A549 (cell line): ENCODE measurements at regions of chr21 and their contacts with region 1.

Region 1: DNA sequence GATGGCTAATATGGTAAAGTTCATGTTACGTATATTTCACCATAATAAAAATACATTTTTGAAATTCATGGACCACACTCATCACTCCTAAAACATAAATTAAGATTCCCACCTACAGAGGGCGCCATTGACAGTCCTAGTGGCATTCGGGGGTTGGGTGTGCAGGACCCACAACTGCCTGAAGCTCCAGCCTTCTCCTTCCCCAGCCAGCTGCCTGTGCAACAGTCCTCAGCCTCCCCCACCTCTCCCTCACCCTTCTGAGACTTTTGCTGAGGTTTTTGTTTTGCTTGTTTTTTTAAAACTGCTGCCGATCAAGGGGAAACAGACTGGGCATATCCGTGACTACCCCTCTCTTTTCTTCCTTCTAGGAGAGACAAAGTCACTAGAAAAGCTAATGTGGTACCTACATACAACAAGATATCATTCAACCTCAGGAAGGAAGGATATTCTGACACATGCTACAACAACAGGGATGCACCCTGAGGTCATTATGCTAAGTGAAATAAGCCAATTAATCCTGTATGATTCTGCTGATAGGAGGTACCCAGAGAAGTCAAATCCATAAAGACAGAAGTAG is 9.2 kb upstream of the EVA1C start:
- DNase-seq: peak; percentile 45 to 62
- ATAC-seq: peak; percentile 81 to 94; a peak in 5 of 6 replicates
- H3K4me3 ChIP-seq: no peak overlapping the region
- H3K27ac ChIP-seq: peak overlapping the region; percentile 45 to 73; a peak in 5 of 6 replicates
- H3K4me1 ChIP-seq: peaks cover 10% of the 10 kb centered on the region
- CTCF ChIP-seq: peak; percentile 61
- EP300 ChIP-seq: no peak
- POLR2A ChIP-seq: no peak
- RAD21 ChIP-seq: peak; percentile 68 to 73

Region 2: DNA sequence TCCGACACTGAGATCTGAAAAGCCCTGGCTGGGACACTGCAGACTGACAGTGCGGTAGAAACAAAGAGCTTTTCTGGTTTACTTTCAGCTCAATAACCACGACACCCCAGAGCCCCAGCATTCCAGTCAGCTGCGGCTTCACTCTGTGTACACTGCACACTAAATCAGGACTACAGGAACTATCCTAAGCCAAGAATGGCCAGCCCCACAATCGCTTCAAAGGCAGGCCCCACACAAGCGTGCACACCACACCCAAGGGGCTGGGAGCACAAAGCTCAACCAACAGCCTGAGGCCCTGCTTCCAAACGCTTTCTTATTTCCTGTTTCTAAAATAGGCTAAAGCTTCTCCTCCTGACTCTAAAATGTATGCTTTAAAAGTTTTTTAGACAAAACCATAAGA is 38.9 kb before region 1 on chr21:
- CTCF ChIA-PET with region 1: no interaction called
- POLR2A ChIA-PET with region 1: no interaction called
- DNase-seq: no peak
- ATAC-seq: no peak
- H3K4me3 ChIP-seq: no peak overlapping the region
- H3K27ac ChIP-seq: no peak overlapping the region
- H3K4me1 ChIP-seq: peaks cover 5% of the 10 kb centered on the region; the same call in 2 of the 3 replicates
- CTCF ChIP-seq: no peak
- EP300 ChIP-seq: no peak
- POLR2A ChIP-seq: no peak
- RAD21 ChIP-seq: no peak

Region 3: GRCh38 chr21:32569261-32570230 is 166.3 kb after region 1 on chr21:
- CTCF ChIA-PET with region 1: interaction called, 18 read pairs
- POLR2A ChIA-PET with region 1: no interaction called
- DNase-seq: peak; percentile 66 to 80
- ATAC-seq: peak; percentile 97 to 98
- H3K4me3 ChIP-seq: peak overlapping the region; percentile 66
- H3K27ac ChIP-seq: peak overlapping the region; percentile 94 to 95
- H3K4me1 ChIP-seq: 0 out of 3 replicates have a peak, but pooled peaks cover 8% of the 10 kb centered on the region
- CTCF ChIP-seq: peak; percentile 76
- EP300 ChIP-seq: no peak
- POLR2A ChIP-seq: peak; percentile 36; the same call in 1 of the 2 replicates
- RAD21 ChIP-seq: peak; percentile 49 to 57